ENCODE measurements at regions of chr6 and their contacts with region 1.

Region 1: GRCh38 chr6:13574149-13574570 is 241 bp upstream of the SIRT5 start:
- DNase-seq: peak; percentile 96
- H3K4me3 ChIP-seq: peak overlapping the region; percentile 67
- H3K27ac ChIP-seq: peak overlapping the region; percentile 74
- H3K4me1 ChIP-seq: no peaks in the 10 kb centered on the region
- H3K27me3 ChIP-seq: no peaks in the 10 kb centered on the region
- CTCF ChIP-seq: peak; percentile 38

Region 2: DNA sequence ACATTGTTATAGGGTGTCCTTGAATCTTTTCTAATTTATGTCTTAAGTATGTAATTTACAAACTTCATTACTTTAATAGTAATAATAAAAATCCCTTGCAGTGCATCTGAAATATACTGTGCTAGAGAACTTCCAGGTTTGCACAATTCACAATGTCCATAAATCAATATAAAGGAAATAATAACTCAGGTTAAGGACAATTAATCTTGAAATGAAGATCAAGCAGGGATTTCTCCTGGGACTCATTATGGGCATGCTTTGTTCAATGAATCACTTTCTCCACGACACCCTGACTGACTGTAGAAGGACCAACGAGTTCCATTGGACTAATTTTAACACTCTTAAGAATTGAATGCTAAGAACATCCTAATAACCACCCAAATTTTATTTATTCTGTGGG is 747.6 kb before region 1 on chr6:
- CTCF ChIA-PET with region 1: no interaction called
- POLR2A ChIA-PET with region 1: no interaction called
- intact Hi-C with region 1: no loop called
- DNase-seq: no peak
- H3K4me3 ChIP-seq: no peak overlapping the region
- H3K27ac ChIP-seq: no peak overlapping the region
- H3K4me1 ChIP-seq: no peaks in the 10 kb centered on the region
- H3K27me3 ChIP-seq: peaks cover 28% of the 10 kb centered on the region
- CTCF ChIP-seq: no peak

Region 3: GRCh38 chr6:13328076-13328874 is 245.9 kb before region 1 on chr6 and contains the start of gene TBC1D7:
- CTCF ChIA-PET with region 1: no interaction called
- POLR2A ChIA-PET with region 1: no interaction called
- intact Hi-C with region 1: no loop called
- DNase-seq: peak; percentile 93
- H3K4me3 ChIP-seq: peak within 1 kb of the TSS; percentile 82
- H3K27ac ChIP-seq: peak within 1 kb of the TSS; percentile 86
- H3K4me1 ChIP-seq: peaks cover 18% of the 10 kb centered on the region
- H3K27me3 ChIP-seq: no peaks in the 10 kb centered on the region
- CTCF ChIP-seq: 0 out of 2 replicates have a peak, but pooled peaks have one; percentile 10
- total RNA-seq, gene TBC1D7: 32.1 and 34.2 TPM in 2 replicates

Region 4: GRCh38 chr6:13614926-13615798 is 41.0 kb after region 1 on chr6 and contains the start of gene NOL7:
- CTCF ChIA-PET with region 1: interaction called, 15 read pairs
- POLR2A ChIA-PET with region 1: no interaction called
- intact Hi-C with region 1: no loop called
- DNase-seq: peak; percentile 99
- H3K4me3 ChIP-seq: peak within 1 kb of the TSS; percentile 91
- H3K27ac ChIP-seq: peak within 1 kb of the TSS; percentile 93
- H3K4me1 ChIP-seq: peaks cover 18% of the 10 kb centered on the region
- H3K27me3 ChIP-seq: no peaks in the 10 kb centered on the region
- CTCF ChIP-seq: peak; percentile 98
- total RNA-seq, gene NOL7: 95.9 and 102 TPM in 2 replicates

Region 5: DNA sequence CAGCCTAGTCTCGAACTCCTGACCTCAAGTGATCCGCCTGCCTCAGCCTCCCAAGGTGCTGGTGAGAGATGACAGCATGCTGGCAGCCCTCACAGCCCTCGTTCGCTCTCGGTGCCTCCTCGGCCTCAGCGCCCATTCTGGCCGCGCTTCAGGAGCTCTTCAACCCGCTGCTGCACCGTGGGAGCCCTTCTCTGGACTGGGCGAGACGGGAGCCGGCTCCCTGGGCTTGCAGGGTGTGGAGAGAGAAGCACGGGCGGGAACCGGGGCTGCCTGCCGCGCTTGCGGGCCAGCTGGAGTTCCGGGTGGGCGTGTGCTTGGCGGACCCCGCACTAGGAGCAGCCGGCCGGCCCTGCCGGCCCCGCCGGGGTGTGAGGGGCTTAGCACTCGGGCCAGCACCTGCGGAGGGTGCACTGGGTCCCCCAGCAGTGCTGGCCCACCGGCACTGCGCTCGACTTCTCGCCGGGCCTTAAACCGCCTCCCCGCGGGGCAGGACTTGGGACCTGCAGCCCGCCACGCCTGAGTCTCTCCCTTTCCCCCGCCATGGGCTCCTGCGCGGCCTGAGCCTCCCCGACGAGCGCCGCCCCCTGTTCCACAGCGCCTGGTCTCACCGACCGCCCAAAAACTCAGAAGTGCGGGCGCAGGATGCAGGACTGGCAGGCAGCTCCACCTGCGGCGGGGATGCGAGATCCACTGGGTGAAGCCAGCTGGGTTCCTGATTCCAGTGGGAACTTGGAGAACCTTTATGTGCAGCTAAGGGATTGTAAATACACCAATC is 169.0 kb after region 1 on chr6:
- CTCF ChIA-PET with region 1: no interaction called
- POLR2A ChIA-PET with region 1: interaction called, 16 read pairs
- intact Hi-C with region 1: no loop called
- DNase-seq: no peak
- H3K4me3 ChIP-seq: no peak overlapping the region
- H3K27ac ChIP-seq: no peak overlapping the region
- H3K4me1 ChIP-seq: no peaks in the 10 kb centered on the region
- H3K27me3 ChIP-seq: no peaks in the 10 kb centered on the region
- CTCF ChIP-seq: no peak

Region 6: GRCh38 chr6:14584450-14584849 is 1010.3 kb after region 1 on chr6:
- CTCF ChIA-PET with region 1: no interaction called
- POLR2A ChIA-PET with region 1: no interaction called
- intact Hi-C with region 1: no loop called
- DNase-seq: no peak
- H3K4me3 ChIP-seq: no peak overlapping the region
- H3K27ac ChIP-seq: no peak overlapping the region
- H3K4me1 ChIP-seq: no peaks in the 10 kb centered on the region
- H3K27me3 ChIP-seq: no peaks in the 10 kb centered on the region
- CTCF ChIP-seq: no peak